ENCODE measurements at regions of chr6 and their contacts with region 1.

Region 1: DNA sequence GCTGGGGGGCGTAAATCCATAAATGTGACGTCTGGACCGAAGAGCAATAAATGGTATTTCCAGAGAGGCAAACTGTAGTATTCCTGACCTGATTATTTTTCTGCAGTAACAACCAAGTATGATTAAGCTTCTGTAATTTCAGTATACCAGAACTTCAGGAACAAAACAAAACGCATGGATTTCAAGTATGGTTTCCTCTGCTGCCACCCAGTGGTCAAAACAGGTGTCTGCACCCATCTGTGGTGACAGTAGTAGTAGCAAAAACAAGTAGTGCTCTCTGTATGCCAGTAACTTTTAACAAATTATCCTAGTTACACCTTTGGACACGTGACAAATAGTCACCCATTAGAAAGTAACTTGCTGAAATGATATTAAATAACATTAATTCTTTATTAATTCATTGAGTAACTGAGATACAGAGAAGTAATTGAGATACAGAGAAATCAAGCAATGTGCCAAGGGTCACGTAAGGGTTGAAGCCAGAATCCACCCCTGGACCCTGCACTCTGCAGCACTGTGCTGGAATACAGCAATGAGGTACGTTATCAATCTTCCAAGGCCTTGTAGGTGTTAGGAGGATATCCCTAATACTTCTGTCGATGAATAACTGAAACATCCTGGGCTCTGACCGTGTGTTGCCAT is 7.9 kb downstream of the CALHM4 start:
- DNase-seq: peak; percentile 62 to 65
- H3K4me3 ChIP-seq: no peak overlapping the region
- H3K27ac ChIP-seq: no peak overlapping the region
- H3K4me1 ChIP-seq: peaks cover 14% of the 10 kb centered on the region; the same call in 1 of the 2 replicates
- H3K27me3 ChIP-seq: no peaks in the 10 kb centered on the region
- CTCF ChIP-seq: peak; percentile 96

Region 2: DNA sequence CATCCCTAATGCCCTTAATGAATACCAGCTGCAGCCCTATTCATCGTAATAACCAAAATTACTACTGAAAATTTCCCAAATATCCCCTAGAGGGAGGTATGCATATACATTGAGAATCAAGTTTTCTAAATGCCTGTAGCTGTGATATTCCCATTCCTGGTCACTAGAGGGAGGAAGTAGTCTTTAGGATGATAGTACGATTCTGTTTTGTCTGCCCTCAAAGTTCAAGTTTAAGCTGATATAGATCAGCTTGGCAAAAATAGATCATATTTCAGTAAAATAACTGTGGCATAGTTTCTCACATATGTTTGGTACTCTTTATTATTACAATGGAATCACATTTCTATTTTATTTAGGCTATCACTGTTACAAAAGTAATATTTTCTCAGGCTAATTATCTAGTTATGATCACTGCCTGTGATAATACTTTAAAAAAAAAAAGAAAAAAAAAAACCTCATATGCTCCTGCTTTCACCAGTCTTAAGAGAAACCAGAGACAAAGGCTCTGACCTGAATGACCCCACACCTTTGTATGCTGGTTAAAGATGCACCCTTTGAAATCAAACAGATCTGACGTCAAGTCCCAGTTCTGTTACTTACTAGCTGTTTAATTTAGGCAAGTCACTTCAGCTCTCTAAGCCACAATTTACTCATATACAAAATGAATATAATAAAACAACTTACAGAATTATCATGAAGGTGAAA is 292.8 kb before region 1 on chr6:
- CTCF ChIA-PET with region 1: interaction called, 11 read pairs
- POLR2A ChIA-PET with region 1: no interaction called
- intact Hi-C with region 1: loop called (anchors 1 kb)
- DNase-seq: peak in 1 of 2 experiments; percentile 83
- H3K4me3 ChIP-seq: no peak overlapping the region
- H3K27ac ChIP-seq: no peak overlapping the region
- H3K4me1 ChIP-seq: peaks cover 6% of the 10 kb centered on the region; the same call in 1 of the 2 replicates
- H3K27me3 ChIP-seq: no peaks in the 10 kb centered on the region
- CTCF ChIP-seq: peak; percentile 98

Region 3: DNA sequence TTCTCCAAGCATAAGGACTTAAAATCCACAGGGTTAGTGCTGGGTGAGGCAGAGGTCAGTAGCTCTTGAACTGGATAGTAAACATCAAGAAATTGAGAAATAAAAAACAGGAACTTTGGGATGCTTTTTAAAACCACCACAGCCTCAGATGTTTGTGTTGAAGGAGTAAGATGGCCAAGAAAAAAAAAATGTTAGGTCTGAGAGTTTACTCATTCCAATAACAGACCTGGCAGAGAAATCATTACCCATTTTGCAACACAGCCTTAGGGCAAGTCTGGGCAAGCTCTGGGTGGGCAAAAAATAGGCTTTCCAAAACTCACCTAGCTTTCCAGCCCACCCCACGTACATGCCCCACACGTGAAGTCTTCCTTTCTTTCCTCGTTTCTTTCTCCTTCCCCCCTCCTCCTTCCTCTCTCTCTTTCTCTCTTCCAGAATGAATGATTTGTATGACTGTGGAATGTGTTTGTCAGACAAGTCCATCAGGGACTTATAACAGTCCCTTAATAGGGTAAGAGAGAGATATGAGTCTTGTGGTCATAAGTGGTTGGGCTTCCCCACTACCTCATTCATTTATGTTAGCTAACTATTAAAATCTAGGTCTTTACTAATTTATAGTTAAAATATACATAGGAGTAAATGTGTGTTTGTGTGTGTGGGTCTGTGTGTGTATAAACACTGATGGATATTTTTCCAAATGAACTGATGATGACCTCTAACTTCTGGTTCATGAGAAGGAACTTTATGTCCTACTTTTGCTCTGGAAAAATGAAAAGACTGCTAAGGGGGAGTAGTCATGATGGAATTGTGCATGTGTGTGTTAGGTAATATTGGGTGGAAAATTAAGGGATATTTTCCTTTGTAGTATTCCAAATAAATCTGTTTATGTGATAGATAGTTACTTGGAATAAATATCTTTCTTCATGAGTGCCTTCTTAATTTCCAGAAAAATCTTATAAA is 208.7 kb before region 1 on chr6:
- CTCF ChIA-PET with region 1: no interaction called
- POLR2A ChIA-PET with region 1: interaction called, 11 read pairs
- intact Hi-C with region 1: no loop called
- DNase-seq: no peak
- H3K4me3 ChIP-seq: no peak overlapping the region
- H3K27ac ChIP-seq: no peak overlapping the region
- H3K4me1 ChIP-seq: no peaks in the 10 kb centered on the region
- H3K27me3 ChIP-seq: no peaks in the 10 kb centered on the region
- CTCF ChIP-seq: no peak

Region 4: DNA sequence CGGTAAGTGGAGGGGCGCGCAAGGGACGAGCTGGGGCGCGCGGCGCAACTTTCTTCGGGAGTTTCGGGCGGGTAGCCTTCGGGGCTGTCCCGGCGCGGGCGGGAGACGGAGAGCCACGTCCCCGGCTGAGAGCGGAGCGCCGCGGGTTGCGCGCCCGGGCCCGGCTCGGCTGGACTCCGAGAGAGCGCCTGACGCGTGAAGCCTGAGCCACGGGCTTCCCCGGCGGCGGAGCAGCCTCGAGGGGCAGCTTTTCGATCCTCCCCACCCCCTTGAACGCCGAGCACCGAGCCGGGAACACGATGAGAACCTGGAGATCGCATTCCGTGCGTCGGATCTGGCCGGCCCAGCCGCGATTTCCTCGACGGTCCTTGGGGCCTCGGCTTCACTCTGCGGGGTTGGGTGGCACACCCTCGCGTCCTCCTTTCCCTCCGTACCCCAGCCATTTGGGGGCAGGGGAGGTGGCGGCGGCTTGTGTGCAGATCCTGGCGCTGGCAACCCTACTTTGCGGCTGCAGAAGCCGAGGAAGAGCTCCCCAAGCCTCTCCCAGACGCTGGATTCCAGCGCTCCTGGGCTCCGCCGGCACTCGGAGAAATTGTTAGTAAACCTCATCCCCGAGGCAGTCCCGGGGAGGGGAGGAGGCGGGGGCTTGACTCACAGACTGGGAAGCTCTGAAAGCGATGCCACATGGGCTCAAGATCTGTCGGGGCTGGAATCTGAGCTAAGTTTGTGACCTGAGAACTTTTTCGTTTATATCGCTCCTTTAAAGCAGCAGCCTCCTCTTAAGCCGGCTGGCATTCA is 190.2 kb before region 1 on chr6:
- CTCF ChIA-PET with region 1: interaction called, 3 read pairs
- POLR2A ChIA-PET with region 1: interaction called, 7 read pairs
- intact Hi-C with region 1: loop called (anchors 10 kb)
- DNase-seq: peak; percentile 74 to 81
- H3K4me3 ChIP-seq: peak overlapping the region; percentile 74
- H3K27ac ChIP-seq: peak overlapping the region; percentile 83
- H3K4me1 ChIP-seq: peaks cover 17% of the 10 kb centered on the region
- H3K27me3 ChIP-seq: no peaks in the 10 kb centered on the region
- CTCF ChIP-seq: no peak

Region 5: DNA sequence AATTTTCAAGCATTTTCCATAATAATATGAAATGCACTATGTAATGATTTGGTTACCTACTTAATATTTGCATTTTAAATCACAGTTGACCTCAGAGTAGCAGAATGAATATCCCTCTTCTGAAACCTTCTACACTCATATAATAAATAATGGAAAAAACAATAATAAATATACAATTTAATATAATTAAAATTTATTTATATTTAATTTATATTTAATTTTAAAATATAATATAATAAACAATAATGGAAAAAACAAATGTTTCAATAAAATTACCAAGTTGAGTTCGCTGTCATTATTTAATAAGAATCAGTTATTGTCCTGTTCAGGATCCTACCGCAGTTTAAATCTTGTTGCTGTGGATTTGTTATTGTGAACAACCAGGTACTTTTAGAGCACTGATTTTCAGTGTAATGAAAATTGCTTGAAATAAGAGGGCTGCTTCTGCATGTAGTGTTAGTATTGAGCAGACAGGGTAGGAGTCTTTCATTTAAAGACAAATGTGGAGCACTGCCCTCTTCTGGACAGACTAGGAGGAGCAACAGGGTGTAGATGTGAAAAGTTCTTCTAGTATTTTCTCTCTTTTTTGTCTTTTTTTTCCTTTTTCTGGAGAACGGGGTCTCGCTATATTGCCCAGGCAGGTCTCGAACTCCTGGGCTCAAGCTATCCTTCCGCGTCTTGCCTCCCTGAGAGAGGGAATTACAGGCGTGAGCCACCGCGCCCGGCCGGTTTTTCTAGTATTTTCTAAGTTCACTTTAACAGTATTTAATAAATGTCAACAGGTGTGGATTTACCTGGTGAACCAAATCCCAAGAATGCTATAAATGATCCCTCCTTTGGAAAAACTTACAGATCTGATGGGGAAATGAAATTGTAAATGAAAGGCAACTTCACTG is 29.6 kb before region 1 on chr6:
- CTCF ChIA-PET with region 1: interaction called, 9 read pairs
- POLR2A ChIA-PET with region 1: no interaction called
- intact Hi-C with region 1: loop called (anchors 1 kb)
- DNase-seq: peak; percentile 47 to 54
- H3K4me3 ChIP-seq: no peak overlapping the region
- H3K27ac ChIP-seq: no peak overlapping the region
- H3K4me1 ChIP-seq: no peaks in the 10 kb centered on the region; the same call in 1 of the 2 replicates
- H3K27me3 ChIP-seq: no peaks in the 10 kb centered on the region
- CTCF ChIP-seq: peak; percentile 91

Measured in PC-9 (cell line).